ENCODE measurements at regions of chr7 and their contacts with region 1.

Region 1: GRCh38 chr7:1579481-1580421 is 9.9 kb upstream of the PSMG3 start:
- DNase-seq: peak; percentile 50 to 75 (median 62)
- H3K4me3 ChIP-seq: no peak overlapping the region
- H3K4me3 Mint-ChIP-seq: peak overlapping the region in 2 of 7 donors; percentile 17 to 54
- H3K27ac ChIP-seq: no peak overlapping the region
- H3K27ac Mint-ChIP-seq: peak overlapping the region in 6 of 8 donors; percentile 1 to 56 (median 32)
- H3K4me1 ChIP-seq: peaks cover 9% of the 10 kb centered on the region
- H3K4me1 Mint-ChIP-seq: peaks cover 10 to 13% (median 12%) of the 10 kb centered on the region in 3 donors
- H3K27me3 ChIP-seq: no peaks in the 10 kb centered on the region
- H3K27me3 Mint-ChIP-seq: no peaks in the 10 kb centered on the region

Region 2: DNA sequence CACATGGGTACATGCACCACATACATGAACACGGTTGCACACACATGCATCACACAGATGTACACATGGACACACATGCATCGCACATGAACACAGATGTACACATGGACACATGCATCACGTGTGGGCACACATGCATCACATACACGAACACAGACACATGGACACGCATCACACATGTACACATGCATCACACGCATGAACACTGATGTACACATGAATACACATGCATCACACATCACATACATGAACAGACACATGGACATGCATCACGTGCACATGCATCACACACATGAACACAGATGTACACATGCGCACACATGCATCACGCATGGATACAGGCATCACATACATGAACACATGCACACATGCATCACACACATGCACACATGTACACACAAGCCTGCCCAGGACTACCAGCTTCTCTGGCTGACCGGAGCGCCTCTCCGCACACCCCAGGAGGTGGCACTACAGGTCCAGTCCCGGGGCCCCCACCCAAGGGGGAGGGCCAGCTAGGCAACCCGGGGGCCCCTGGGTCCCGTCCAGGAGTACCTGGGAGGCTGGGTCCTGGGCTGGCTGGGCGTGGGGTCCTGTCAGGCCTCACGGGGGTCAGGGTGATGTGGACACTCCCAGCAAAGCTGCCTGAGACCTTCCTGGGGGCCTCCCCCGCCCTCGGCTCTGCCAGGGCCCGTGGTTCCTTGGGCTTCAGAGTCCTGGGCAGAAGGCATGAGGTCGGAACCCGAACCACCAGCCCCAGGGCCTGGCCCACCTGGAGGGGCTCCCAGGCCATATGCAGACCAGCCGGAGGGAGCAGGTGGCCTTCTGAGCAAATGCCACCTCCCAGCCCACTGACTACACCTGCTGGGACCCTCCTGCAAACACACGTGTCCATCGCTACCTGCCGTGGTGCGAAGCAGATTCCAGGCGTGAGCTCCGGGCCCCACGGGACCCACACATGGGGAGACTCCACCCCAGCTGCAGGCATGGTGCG is 140.1 kb before region 1 on chr7:
- CTCF ChIA-PET with region 1: no interaction called
- POLR2A ChIA-PET with region 1: no interaction called
- DNase-seq: no peak
- H3K4me3 ChIP-seq: no peak overlapping the region
- H3K4me3 Mint-ChIP-seq: no peak overlapping the region
- H3K27ac ChIP-seq: no peak overlapping the region
- H3K27ac Mint-ChIP-seq: no peak overlapping the region
- H3K4me1 ChIP-seq: no peaks in the 10 kb centered on the region
- H3K4me1 Mint-ChIP-seq: no peaks in the 10 kb centered on the region
- H3K27me3 ChIP-seq: no peaks in the 10 kb centered on the region
- H3K27me3 Mint-ChIP-seq: peaks cover 0 to 2% of the 10 kb centered on the region in 2 donors

Region 3: DNA sequence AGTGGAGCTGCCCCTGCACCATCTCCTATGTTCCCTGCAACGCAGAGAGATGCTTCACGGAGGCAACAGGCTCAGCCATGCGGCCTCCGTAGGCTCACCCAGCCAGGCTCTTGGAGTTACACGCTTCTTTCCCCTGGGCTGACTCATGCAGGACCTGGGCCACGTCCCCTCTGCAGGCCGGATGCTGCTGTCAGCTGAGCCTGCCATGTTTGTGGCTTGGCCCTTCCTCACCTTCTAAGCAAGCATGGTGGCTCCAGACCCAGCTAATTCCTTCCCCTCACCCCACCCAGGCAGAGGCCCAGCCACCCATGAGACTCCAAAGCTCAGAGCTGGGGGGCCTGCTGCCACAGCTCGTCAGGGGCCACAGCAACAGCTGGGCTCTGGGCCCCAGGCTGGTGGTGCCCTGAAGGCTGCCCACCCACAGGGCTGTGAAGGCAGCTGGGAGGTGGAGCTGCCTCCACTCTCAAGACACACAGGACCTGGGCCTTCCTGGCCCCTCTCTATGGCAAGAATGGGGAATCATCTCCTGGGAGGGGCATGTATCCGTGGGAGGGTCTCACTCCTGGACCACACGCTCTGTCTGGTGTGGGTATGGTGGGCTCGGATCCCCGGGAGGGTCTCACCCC is 309.9 kb after region 1 on chr7:
- CTCF ChIA-PET with region 1: no interaction called
- POLR2A ChIA-PET with region 1: no interaction called
- DNase-seq: no peak
- H3K4me3 ChIP-seq: no peak overlapping the region
- H3K4me3 Mint-ChIP-seq: peak overlapping the region in 1 of 7 donors; percentile 40
- H3K27ac ChIP-seq: no peak overlapping the region
- H3K27ac Mint-ChIP-seq: peak overlapping the region in 6 of 8 donors; percentile 70 to 90 (median 80)
- H3K4me1 ChIP-seq: peaks cover 5% of the 10 kb centered on the region
- H3K4me1 Mint-ChIP-seq: peaks cover 16 to 44% (median 19%) of the 10 kb centered on the region in 3 donors
- H3K27me3 ChIP-seq: no peaks in the 10 kb centered on the region
- H3K27me3 Mint-ChIP-seq: no peaks in the 10 kb centered on the region

Region 4: GRCh38 chr7:2350861-2351260 is 771.1 kb after region 1 on chr7:
- CTCF ChIA-PET with region 1: interaction called, 12 read pairs
- POLR2A ChIA-PET with region 1: no interaction called
- DNase-seq: no peak
- H3K4me3 ChIP-seq: no peak overlapping the region
- H3K4me3 Mint-ChIP-seq: no peak overlapping the region
- H3K27ac ChIP-seq: no peak overlapping the region
- H3K27ac Mint-ChIP-seq: no peak overlapping the region
- H3K4me1 ChIP-seq: peaks cover 11% of the 10 kb centered on the region
- H3K4me1 Mint-ChIP-seq: peaks cover 15 to 23% (median 22%) of the 10 kb centered on the region in 3 donors
- H3K27me3 ChIP-seq: no peaks in the 10 kb centered on the region
- H3K27me3 Mint-ChIP-seq: no peaks in the 10 kb centered on the region

Measured in CD8-positive, alpha-beta memory T cell (primary cell).